ENCODE measurements at regions of chr1 and their contacts with region 1.

Region 1: DNA sequence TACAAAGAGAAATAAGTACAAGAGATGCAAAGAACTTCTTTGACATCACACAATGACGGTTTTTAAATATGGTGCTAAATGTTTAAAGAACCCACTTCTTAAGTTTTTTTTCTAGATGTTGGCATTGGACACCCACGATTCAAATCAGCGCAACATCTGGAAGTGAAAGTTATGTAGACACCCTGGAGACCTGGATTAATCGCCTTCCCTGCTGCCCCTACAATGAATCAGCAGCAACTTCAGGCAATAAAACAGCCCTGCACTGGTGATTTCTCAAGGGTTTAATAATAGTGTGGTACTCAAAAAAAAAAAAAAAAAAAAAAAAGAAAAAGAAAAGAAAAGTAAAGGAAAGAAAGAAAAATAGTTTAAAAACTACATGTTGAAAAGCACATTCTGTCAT is 248.3 kb downstream of the NUF2 start:
- DNase-seq: no peak
- H3K4me3 Mint-ChIP-seq: no peak overlapping the region
- H3K27ac Mint-ChIP-seq: no peak overlapping the region
- H3K4me1 Mint-ChIP-seq: no peaks in the 10 kb centered on the region
- H3K27me3 Mint-ChIP-seq: no peaks in the 10 kb centered on the region
- CTCF ChIP-seq: no peak

Region 2: GRCh38 chr1:163104385-163105099 is 465.5 kb before region 1 on chr1:
- CTCF ChIA-PET with region 1: no interaction called
- intact Hi-C with region 1: no loop called
- DNase-seq: no peak
- H3K4me3 Mint-ChIP-seq: no peak overlapping the region
- H3K27ac Mint-ChIP-seq: no peak overlapping the region
- H3K4me1 Mint-ChIP-seq: no peaks in the 10 kb centered on the region
- H3K27me3 Mint-ChIP-seq: no peaks in the 10 kb centered on the region
- CTCF ChIP-seq: no peak

Region 3: GRCh38 chr1:163523373-163524029 is 46.6 kb before region 1 on chr1:
- CTCF ChIA-PET with region 1: no interaction called
- intact Hi-C with region 1: no loop called
- DNase-seq: no peak
- H3K4me3 Mint-ChIP-seq: no peak overlapping the region
- H3K27ac Mint-ChIP-seq: no peak overlapping the region
- H3K4me1 Mint-ChIP-seq: no peaks in the 10 kb centered on the region
- H3K27me3 Mint-ChIP-seq: no peaks in the 10 kb centered on the region
- CTCF ChIP-seq: no peak

Region 4: DNA sequence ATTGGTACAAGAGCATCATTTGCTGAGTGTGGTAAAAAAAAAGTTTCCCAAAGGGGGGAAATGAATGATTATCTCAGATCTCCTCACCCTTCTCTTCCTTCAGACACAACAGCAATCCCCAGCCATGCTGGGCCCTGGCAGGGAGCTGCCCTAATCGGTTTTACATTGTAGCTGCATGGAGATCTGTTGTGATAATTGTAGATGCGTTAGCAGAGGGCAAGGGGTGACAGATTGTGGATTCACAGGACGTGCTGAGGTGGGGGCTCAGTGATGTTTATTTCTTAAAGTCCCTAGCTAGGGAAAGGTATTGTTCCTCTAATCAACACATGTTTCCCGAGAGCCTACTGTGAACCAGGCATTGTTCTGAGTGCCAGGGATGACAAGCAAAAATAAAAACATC is 1293.0 kb after region 1 on chr1:
- CTCF ChIA-PET with region 1: no interaction called
- intact Hi-C with region 1: loop called (anchors 5 kb)
- DNase-seq: no peak
- H3K4me3 Mint-ChIP-seq: no peak overlapping the region
- H3K27ac Mint-ChIP-seq: no peak overlapping the region
- H3K4me1 Mint-ChIP-seq: no peaks in the 10 kb centered on the region
- H3K27me3 Mint-ChIP-seq: peaks cover 31% of the 10 kb centered on the region
- CTCF ChIP-seq: no peak